Activated CD8-positive, alpha-beta T cell treated with anti-CD3 and anti-CD28 coated beads, Interleukin-2, amount 10 ng/mL, durations not matched to agents 7 days and 5 days (primary cell): ENCODE measurements at regions of chr6 and their contacts with region 1.

Region 1: GRCh38 chr6:107991061-107991460 is 33.1 kb upstream of the SEC63 start:
- DNase-seq: no peak
- ATAC-seq: no peak
- H3K4me3 Mint-ChIP-seq: no peak overlapping the region
- H3K27ac Mint-ChIP-seq: peak overlapping the region; percentile 79
- H3K4me1 Mint-ChIP-seq: peaks cover 9% of the 10 kb centered on the region
- H3K27me3 Mint-ChIP-seq: no peaks in the 10 kb centered on the region

Region 2: GRCh38 chr6:107740496-107741190 is 250.4 kb before region 1 on chr6:
- CTCF ChIA-PET with region 1: no interaction called
- POLR2A ChIA-PET with region 1: no interaction called
- DNase-seq: peak; percentile 65
- ATAC-seq: peak; percentile 62
- H3K4me3 Mint-ChIP-seq: peak overlapping the region; percentile 61
- H3K27ac Mint-ChIP-seq: peak overlapping the region; percentile 87
- H3K4me1 Mint-ChIP-seq: peaks cover 62% of the 10 kb centered on the region
- H3K27me3 Mint-ChIP-seq: no peaks in the 10 kb centered on the region

Region 3: GRCh38 chr6:107977283-107977682 is 13.8 kb before region 1 on chr6:
- CTCF ChIA-PET with region 1: interaction called, 22 read pairs
- POLR2A ChIA-PET with region 1: no interaction called
- DNase-seq: no peak
- ATAC-seq: no peak
- H3K4me3 Mint-ChIP-seq: no peak overlapping the region
- H3K27ac Mint-ChIP-seq: no peak overlapping the region
- H3K4me1 Mint-ChIP-seq: peaks cover 21% of the 10 kb centered on the region
- H3K27me3 Mint-ChIP-seq: peaks cover 11% of the 10 kb centered on the region